Panc1 (cell line): ENCODE measurements at regions of chr5 and their contacts with region 1.

Region 1: DNA sequence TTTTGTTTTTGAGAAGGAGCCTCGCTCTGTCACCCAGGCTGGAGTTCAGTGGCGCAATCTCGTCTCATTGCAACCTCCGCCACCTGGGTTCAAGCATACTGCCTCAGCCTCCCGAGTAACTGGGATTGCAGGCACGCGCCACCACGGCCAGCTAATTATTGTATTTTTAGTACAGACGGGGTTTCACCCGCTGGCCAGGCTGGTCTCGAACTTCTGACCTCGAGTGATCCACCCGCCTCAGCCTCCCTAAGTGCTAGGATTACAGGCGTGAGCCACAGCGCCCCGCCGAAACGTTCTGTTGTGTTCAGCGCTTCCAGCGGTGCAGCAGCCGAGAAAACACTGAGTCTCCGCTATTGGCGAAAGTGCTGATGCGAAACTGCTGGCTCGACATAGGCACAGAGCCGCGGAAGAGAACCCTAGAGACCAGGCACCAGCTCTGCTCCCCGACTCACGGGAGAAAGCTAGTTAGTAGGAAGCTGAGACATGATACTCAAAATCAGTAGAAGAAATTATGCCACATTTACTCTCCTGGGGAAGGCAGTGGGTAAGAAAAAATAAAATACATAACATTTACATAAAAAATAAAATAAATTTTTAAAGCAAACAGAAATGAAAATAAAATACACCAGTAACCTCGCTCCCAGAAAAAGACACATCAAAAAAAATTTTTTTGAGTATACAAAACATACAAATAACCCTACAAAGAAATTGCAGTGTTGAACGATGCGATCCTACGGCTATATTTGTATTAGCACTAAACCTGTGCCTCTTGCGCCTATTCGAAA is 31.6 kb downstream of the ANXA2R start:
- DNase-seq: peak; percentile 96
- ATAC-seq: peak; percentile 76
- H3K4me3 ChIP-seq: peak overlapping the region; percentile 54 to 74
- H3K27ac ChIP-seq: peak overlapping the region; percentile 98
- H3K4me1 ChIP-seq: peaks cover 25% of the 10 kb centered on the region
- H3K27me3 ChIP-seq: no peaks in the 10 kb centered on the region
- CTCF ChIP-seq: peak; percentile 46

Region 2: DNA sequence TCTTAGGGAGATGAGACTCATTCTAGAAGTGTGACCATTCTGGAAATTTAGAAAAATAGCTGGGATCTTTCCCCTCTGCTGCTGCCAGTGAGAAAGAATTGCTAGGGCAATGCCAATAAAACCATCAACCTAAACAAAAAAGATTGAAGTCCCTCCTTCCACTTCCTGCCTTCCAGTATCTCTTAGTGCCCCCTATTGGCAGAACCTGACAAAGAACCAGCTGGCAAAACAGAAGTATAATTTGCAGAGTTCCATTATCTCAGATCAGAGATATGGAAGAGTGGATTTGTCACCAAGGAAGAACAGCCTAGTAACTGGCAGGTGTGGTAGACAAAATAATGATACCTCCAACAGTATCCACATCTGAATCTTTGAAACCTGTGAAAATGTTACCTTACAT is 1484.4 kb before region 1 on chr5:
- CTCF ChIA-PET with region 1: interaction called, 10 read pairs
- POLR2A ChIA-PET with region 1: no interaction called
- in situ Hi-C with region 1: no loop called
- intact Hi-C with region 1: no loop called
- DNase-seq: no peak
- ATAC-seq: no peak
- H3K4me3 ChIP-seq: no peak overlapping the region
- H3K27ac ChIP-seq: no peak overlapping the region
- H3K4me1 ChIP-seq: no peaks in the 10 kb centered on the region
- H3K27me3 ChIP-seq: no peaks in the 10 kb centered on the region
- CTCF ChIP-seq: peak; percentile 22; the same call in 1 of the 2 replicates

Region 3: GRCh38 chr5:42908509-42909488 is 99.8 kb before region 1 on chr5:
- CTCF ChIA-PET with region 1: interaction called, 8 read pairs
- POLR2A ChIA-PET with region 1: no interaction called
- in situ Hi-C with region 1: loop called (anchors 25 kb)
- intact Hi-C with region 1: loop called (anchors 2 kb)
- DNase-seq: peak; percentile 89
- ATAC-seq: peak; percentile 93
- H3K4me3 ChIP-seq: peak overlapping the region; percentile 56 to 79
- H3K27ac ChIP-seq: peak overlapping the region; percentile 75
- H3K4me1 ChIP-seq: peaks cover 8% of the 10 kb centered on the region; the same call in 1 of the 2 replicates
- H3K27me3 ChIP-seq: peaks cover 11% of the 10 kb centered on the region
- CTCF ChIP-seq: peak; percentile 94

Region 4: DNA sequence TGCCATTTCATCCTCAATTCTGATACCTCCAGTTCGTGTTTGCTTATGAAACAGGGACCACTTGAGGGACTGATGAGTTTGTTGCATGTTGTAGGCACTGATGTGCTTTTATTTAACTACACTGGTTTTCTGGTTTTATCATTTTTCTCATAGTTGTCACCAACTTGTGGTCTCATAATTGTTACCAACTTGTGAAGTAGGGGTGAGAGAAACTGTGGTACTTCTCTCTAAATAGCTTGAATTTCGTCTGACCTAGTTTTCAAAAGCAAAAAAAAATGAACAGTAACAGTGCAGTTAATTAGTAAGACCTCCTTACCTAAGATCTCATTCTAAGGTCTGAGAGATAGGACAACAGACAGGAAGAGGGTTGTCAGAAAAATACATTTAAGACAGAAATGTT is 46.4 kb before region 1 on chr5:
- CTCF ChIA-PET with region 1: no interaction called
- POLR2A ChIA-PET with region 1: no interaction called
- in situ Hi-C with region 1: no loop called
- intact Hi-C with region 1: no loop called
- DNase-seq: no peak
- ATAC-seq: no peak
- H3K4me3 ChIP-seq: no peak overlapping the region
- H3K27ac ChIP-seq: no peak overlapping the region
- H3K4me1 ChIP-seq: no peaks in the 10 kb centered on the region
- H3K27me3 ChIP-seq: no peaks in the 10 kb centered on the region
- CTCF ChIP-seq: no peak

Region 5: DNA sequence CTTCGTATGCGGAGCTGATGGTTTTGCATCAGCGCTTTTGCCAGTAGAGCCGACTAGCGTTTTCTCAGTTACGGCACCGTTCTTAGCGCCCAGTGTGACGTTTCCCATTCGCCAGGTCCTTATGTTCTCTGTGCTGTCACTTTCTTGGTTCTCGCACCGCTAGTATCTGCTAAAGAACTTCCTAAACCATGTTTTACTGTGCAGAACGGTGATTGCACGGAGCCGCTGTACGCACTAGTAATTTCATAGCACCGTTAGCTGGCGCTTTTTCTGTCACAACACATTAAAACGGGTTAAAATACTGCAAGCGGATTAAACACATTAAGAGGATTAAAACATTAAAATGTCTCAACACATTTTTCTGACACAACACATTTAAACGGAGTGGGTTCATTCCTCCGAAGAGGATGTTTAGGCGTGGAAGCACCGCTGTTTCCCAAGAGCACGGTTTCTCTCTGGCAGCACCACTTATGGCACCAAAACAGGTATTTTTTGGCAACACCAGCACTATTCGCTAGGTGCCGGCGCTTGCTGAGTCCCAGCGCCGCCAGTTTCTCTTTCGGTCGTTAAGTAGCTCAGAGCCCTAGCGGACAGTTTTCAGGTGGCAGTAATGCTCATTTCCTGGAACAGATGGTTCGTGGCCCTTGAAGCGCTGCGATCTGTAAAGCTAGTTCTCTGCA is 11.2 kb after region 1 on chr5:
- CTCF ChIA-PET with region 1: interaction called, 8 read pairs
- POLR2A ChIA-PET with region 1: interaction called, 10 read pairs
- in situ Hi-C with region 1: no loop called
- intact Hi-C with region 1: no loop called
- DNase-seq: peak; percentile 87
- ATAC-seq: peak; percentile 83
- H3K4me3 ChIP-seq: peak overlapping the region; percentile 65 to 75
- H3K27ac ChIP-seq: peak overlapping the region; percentile 97
- H3K4me1 ChIP-seq: peaks cover 37% of the 10 kb centered on the region
- H3K27me3 ChIP-seq: no peaks in the 10 kb centered on the region
- CTCF ChIP-seq: peak; percentile 60

Region 6: DNA sequence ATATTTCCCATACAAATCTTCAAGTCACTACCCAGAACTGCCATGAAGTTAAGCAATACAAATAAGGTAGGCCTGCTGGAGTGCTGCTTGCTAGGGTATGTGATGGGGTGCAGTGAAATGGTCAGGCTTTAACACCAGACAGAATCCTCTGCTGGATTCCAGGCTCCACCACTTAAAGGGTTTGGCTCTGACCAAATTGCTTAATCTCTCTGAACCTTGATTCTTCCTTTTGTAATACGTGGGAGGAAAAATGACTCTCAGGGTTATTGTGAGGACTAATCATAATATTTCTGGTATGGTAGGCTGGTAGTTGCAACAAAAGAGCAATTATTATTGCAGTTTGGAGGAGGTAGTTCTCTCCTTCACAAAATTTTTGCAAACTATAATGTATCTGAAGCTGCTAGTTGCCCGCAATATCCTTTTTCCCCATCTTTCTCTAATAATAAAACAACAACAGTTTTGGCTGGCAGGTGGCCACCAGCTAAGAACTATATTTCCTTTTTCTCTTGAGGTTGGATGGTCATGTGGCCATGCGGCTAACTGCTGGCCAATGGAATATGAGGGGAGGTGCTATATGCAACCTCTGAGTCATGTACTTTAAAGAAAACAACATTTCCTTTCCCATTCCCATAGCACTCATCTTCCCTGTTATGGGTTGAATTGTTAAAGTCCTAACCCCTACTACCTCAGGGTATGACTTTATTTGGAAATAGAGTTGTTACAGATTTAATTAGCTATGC is 359.5 kb after region 1 on chr5:
- CTCF ChIA-PET with region 1: no interaction called
- POLR2A ChIA-PET with region 1: no interaction called
- in situ Hi-C with region 1: no loop called
- intact Hi-C with region 1: no loop called
- DNase-seq: no peak
- ATAC-seq: no peak
- H3K4me3 ChIP-seq: no peak overlapping the region
- H3K27ac ChIP-seq: no peak overlapping the region
- H3K4me1 ChIP-seq: no peaks in the 10 kb centered on the region
- H3K27me3 ChIP-seq: peaks cover 2% of the 10 kb centered on the region; the same call in 1 of the 2 replicates
- CTCF ChIP-seq: no peak